Activated CD8-positive, alpha-beta memory T cell treated with anti-CD3 and anti-CD28 coated beads, Interleukin-2, amount 10 ng/mL, durations not matched to agents 7 days and 5 days (primary cell): ENCODE measurements at regions of chr6 and their contacts with region 1.

Region 1: DNA sequence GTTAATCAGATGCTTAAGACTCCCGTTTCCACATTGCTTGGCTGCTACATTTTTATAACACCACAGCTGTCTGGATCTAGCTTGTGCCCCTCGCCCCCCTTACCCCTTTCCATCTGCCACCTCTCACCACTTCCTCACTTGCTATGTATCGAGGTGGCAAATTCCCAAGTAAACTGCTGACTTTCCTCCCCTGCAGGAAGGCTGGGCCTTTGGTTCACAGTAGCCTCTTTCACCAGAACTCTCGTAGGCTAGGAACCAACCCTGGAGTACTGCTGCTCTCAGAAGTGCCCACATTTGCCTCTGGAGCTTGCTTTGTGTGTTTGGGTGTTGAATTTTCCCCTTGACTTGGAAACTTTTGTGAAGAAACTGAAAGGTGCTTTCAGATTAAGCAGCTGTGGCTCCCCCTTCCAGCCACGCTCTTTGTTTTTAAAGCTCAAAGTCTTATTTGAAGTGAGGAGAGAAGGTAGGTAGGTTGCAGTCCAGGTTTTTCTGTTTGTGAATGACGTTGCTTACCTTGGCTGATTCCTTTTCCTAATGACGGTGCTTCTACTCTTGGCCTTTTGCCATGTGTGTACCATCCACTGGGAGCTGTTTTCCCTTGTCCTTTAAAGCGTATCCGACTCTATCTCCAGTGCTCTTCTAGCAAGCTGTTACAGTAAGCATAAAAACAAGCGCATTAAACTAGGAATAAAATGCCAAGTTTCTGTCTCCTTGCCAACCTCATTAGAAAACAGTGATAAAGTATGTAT is 90.4 kb downstream of the CARMIL1 start:
- DNase-seq: no peak
- ATAC-seq: peak; percentile 9
- H3K4me3 Mint-ChIP-seq: peak overlapping the region; percentile 41
- H3K27ac Mint-ChIP-seq: peak overlapping the region; percentile 76
- H3K4me1 Mint-ChIP-seq: peaks cover 69% of the 10 kb centered on the region
- H3K27me3 Mint-ChIP-seq: no peaks in the 10 kb centered on the region

Region 2: GRCh38 chr6:25384967-25385366 is 15.4 kb after region 1 on chr6:
- CTCF ChIA-PET with region 1: no interaction called
- DNase-seq: no peak
- ATAC-seq: no peak
- H3K4me3 Mint-ChIP-seq: no peak overlapping the region
- H3K27ac Mint-ChIP-seq: no peak overlapping the region
- H3K4me1 Mint-ChIP-seq: peaks cover 3% of the 10 kb centered on the region
- H3K27me3 Mint-ChIP-seq: no peaks in the 10 kb centered on the region

Region 3: GRCh38 chr6:25404693-25405169 is 35.1 kb after region 1 on chr6:
- CTCF ChIA-PET with region 1: interaction called, 11 read pairs
- DNase-seq: peak; percentile 69
- ATAC-seq: peak; percentile 94
- H3K4me3 Mint-ChIP-seq: no peak overlapping the region
- H3K27ac Mint-ChIP-seq: no peak overlapping the region
- H3K4me1 Mint-ChIP-seq: peaks cover 16% of the 10 kb centered on the region
- H3K27me3 Mint-ChIP-seq: no peaks in the 10 kb centered on the region